ENCODE measurements at regions of chr17 and their contacts with region 1.

Region 1: DNA sequence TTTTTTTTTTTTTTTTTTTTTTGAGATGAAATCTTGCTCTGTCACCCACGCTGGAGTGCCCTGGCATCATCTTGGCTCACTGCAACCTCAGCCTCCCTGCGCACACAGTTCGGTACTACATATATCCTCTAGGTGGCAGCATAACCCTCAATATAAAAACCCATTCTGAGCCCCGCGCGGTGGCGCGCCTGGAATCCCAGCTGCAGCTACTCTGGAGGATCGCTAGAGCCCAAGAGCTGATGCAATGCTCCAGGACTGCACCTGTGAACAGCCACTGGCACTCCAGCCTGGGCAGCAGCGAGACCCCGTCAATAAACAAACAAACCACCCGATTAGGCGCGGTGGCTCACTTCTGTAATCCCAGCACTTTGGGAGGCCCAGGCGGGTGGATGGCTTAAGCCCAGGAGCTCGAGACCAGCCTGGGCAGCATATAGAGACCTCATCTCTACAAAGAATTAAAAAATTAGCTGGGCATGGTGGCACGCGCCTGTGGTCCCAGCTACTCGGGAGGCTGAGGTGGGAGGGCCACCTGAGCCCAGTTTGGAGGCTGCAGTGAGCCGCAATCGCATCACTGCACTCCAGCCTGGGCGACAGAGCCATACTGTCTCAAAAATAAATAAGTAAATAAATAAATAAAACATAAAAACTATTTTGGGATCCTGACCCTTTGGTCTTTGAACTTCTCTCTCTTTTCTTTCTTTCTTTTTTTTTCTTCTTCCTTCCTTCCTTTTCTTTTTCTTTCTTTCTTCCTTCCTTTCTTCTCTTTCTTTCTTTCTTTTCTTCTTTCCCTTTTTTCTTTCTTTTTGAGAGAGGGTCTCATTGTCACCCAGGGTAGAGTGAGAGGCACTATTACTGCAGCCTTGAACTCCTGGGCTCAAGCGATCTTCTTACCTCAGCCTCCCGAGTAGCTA is 15.4 kb upstream of the AKAP10 start:
- DNase-seq: peak; percentile 86
- ATAC-seq: peak; percentile 98
- H3K4me3 ChIP-seq: peak overlapping the region; percentile 21 to 54
- H3K27ac ChIP-seq: peak overlapping the region; percentile 55; the same call in 1 of the 2 replicates
- H3K4me1 ChIP-seq: no peaks in the 10 kb centered on the region; the same call in 1 of the 2 replicates
- H3K27me3 ChIP-seq: no peaks in the 10 kb centered on the region
- CTCF ChIP-seq: peak; percentile 78; the same call in 1 of the 2 replicates

Region 2: GRCh38 chr17:19583871-19584270 is 409.2 kb before region 1 on chr17:
- CTCF ChIA-PET with region 1: interaction called, 13 read pairs
- POLR2A ChIA-PET with region 1: no interaction called
- in situ Hi-C with region 1: no loop called
- intact Hi-C with region 1: no loop called
- DNase-seq: no peak
- ATAC-seq: no peak
- H3K4me3 ChIP-seq: no peak overlapping the region
- H3K27ac ChIP-seq: no peak overlapping the region
- H3K4me1 ChIP-seq: no peaks in the 10 kb centered on the region
- H3K27me3 ChIP-seq: no peaks in the 10 kb centered on the region
- CTCF ChIP-seq: no peak

Region 3: GRCh38 chr17:19977311-19978208 is 15.5 kb before region 1 on chr17 and contains the start of gene AKAP10:
- CTCF ChIA-PET with region 1: no interaction called
- POLR2A ChIA-PET with region 1: no interaction called
- in situ Hi-C with region 1: no loop called
- intact Hi-C with region 1: no loop called
- DNase-seq: no peak
- ATAC-seq: peak; percentile 97
- H3K4me3 ChIP-seq: peak within 1 kb of the TSS; percentile 88 to 93
- H3K27ac ChIP-seq: peak within 1 kb of the TSS; percentile 94
- H3K4me1 ChIP-seq: no peaks in the 10 kb centered on the region; the same call in 1 of the 2 replicates
- H3K27me3 ChIP-seq: no peaks in the 10 kb centered on the region
- CTCF ChIP-seq: no peak
- total RNA-seq, gene AKAP10: 24.6 TPM

Region 4: DNA sequence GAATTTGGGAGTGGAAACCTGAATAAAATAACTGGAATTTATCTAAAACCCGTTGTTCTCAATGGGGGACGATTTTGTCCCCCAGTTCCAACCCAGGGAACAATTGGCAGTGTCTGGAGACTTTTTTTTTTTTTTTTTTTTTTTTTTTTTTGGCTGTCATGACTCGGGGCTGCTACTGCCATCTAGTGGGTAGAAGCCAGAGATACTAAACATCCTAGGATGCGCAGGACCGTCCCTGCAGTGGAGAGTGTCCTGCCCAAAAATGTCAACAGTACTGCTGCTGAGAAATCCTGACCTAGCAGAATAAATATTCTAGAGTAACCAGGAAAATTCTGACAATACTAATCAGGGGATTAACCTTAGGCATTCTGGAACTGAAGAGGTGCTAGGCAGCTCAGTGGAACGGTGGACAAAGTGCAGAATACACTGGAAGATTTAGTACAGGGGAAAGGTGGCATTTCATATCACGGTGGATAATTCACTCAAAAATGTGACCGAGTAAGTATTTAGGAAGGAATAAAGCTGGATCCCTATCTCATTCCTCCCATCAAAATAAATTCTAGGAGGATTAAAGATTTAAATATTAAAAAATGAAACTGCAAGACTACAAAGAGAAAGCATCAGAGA is 123.7 kb after region 1 on chr17:
- CTCF ChIA-PET with region 1: interaction called, 6 read pairs
- POLR2A ChIA-PET with region 1: no interaction called
- in situ Hi-C with region 1: no loop called
- intact Hi-C with region 1: loop called (anchors 2 kb)
- DNase-seq: no peak
- ATAC-seq: peak; percentile 87
- H3K4me3 ChIP-seq: no peak overlapping the region
- H3K27ac ChIP-seq: no peak overlapping the region
- H3K4me1 ChIP-seq: no peaks in the 10 kb centered on the region
- H3K27me3 ChIP-seq: no peaks in the 10 kb centered on the region
- CTCF ChIP-seq: peak; percentile 81

Region 5: GRCh38 chr17:20226814-20227482 is 233.9 kb after region 1 on chr17:
- CTCF ChIA-PET with region 1: no interaction called
- POLR2A ChIA-PET with region 1: no interaction called
- in situ Hi-C with region 1: no loop called
- intact Hi-C with region 1: loop called (anchors 5 kb)
- DNase-seq: no peak
- ATAC-seq: peak; percentile 91
- H3K4me3 ChIP-seq: no peak overlapping the region
- H3K27ac ChIP-seq: no peak overlapping the region
- H3K4me1 ChIP-seq: peaks cover 7% of the 10 kb centered on the region
- H3K27me3 ChIP-seq: no peaks in the 10 kb centered on the region
- CTCF ChIP-seq: peak; percentile 88

Region 6: GRCh38 chr17:20315821-20316220 is 322.8 kb after region 1 on chr17:
- CTCF ChIA-PET with region 1: no interaction called
- POLR2A ChIA-PET with region 1: no interaction called
- in situ Hi-C with region 1: no loop called
- intact Hi-C with region 1: loop called (anchors 10 kb)
- DNase-seq: no peak
- ATAC-seq: no peak
- H3K4me3 ChIP-seq: no peak overlapping the region
- H3K27ac ChIP-seq: no peak overlapping the region
- H3K4me1 ChIP-seq: no peaks in the 10 kb centered on the region
- H3K27me3 ChIP-seq: no peaks in the 10 kb centered on the region
- CTCF ChIP-seq: no peak